CD8-positive, alpha-beta memory T cell (primary cell): ENCODE measurements at regions of chr15 and their contacts with region 1.

Region 1: DNA sequence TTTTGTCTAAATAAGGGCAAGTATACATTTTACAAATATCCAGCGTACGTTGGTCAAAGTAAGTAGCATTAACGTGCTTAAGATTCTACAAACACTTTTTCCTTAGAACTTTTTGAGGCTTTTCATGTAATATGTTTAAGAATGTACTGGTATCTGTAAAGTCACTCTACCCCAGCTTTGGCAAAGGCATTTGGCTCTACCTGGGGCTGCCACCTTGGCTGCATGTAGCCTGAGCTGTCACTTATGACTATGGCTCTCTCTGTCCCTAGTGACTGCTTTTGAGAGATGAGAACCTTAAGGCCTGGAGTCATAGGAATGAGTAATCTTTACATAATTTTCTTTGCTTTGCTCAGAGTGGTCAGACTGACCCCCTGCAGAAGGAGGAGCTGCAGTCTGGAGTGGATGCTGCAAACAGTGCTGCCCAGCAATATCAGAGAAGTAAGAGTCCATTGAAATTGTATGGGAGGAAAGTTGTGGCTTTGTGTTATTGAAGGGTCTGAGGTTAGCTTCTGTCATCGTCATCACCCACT is 61.2 kb downstream of the IQGAP1 start:
- DNase-seq: no peak
- H3K4me3 ChIP-seq: no peak overlapping the region
- H3K4me3 Mint-ChIP-seq: no peak overlapping the region
- H3K27ac ChIP-seq: no peak overlapping the region
- H3K27ac Mint-ChIP-seq: peak overlapping the region in 1 of 8 donors; percentile 74
- H3K4me1 ChIP-seq: no peaks in the 10 kb centered on the region
- H3K4me1 Mint-ChIP-seq: peaks cover 4 to 20% (median 8%) of the 10 kb centered on the region in 3 donors
- H3K27me3 ChIP-seq: no peaks in the 10 kb centered on the region
- H3K27me3 Mint-ChIP-seq: peaks cover 0 to 1% of the 10 kb centered on the region in 2 donors

Region 2: GRCh38 chr15:90463381-90463780 is 14.1 kb after region 1 on chr15:
- CTCF ChIA-PET with region 1: no interaction called
- POLR2A ChIA-PET with region 1: no interaction called
- DNase-seq: no peak
- H3K4me3 ChIP-seq: no peak overlapping the region
- H3K4me3 Mint-ChIP-seq: no peak overlapping the region
- H3K27ac ChIP-seq: no peak overlapping the region
- H3K27ac Mint-ChIP-seq: peak overlapping the region in 3 of 8 donors; percentile 9 to 35 (median 14)
- H3K4me1 ChIP-seq: no peaks in the 10 kb centered on the region
- H3K4me1 Mint-ChIP-seq: peaks cover 15 to 23% (median 16%) of the 10 kb centered on the region in 3 donors
- H3K27me3 ChIP-seq: no peaks in the 10 kb centered on the region
- H3K27me3 Mint-ChIP-seq: no peaks in the 10 kb centered on the region

Region 3: DNA sequence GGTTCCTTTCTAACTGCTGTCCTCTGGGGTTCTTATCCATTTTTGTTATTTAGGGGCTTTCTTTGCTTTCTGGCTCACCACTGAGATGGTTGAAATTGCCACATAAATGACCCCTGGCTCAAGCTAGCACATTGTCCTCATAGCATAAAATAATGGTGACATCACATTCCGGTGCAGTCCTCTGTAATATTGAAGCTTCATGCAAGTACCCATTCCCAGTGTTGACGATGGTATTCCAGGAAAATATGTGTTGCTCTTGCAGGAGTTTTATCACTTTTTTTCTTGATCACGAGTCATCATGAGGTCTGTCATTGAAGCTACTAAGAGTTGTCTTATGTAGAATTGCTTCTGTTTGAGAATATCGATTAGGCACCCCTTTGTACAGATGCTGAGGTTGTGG is 136.6 kb after region 1 on chr15:
- CTCF ChIA-PET with region 1: no interaction called
- POLR2A ChIA-PET with region 1: interaction called, 10 read pairs
- DNase-seq: no peak
- H3K4me3 ChIP-seq: no peak overlapping the region
- H3K4me3 Mint-ChIP-seq: no peak overlapping the region
- H3K27ac ChIP-seq: no peak overlapping the region
- H3K27ac Mint-ChIP-seq: peak overlapping the region in 1 of 8 donors; percentile 1
- H3K4me1 ChIP-seq: peaks cover 47% of the 10 kb centered on the region
- H3K4me1 Mint-ChIP-seq: peaks cover 39 to 57% (median 50%) of the 10 kb centered on the region in 3 donors
- H3K27me3 ChIP-seq: no peaks in the 10 kb centered on the region
- H3K27me3 Mint-ChIP-seq: no peaks in the 10 kb centered on the region